ENCODE measurements at regions of chr5 and their contacts with region 1.

Region 1: GRCh38 chr5:58460732-58461286 is 923 bp upstream of the PLK2 start:
- DNase-seq: peak; percentile 97
- H3K4me3 Mint-ChIP-seq: peak overlapping the region; percentile 85
- H3K27ac Mint-ChIP-seq: peak overlapping the region; percentile 43
- H3K4me1 Mint-ChIP-seq: peaks cover 20% of the 10 kb centered on the region
- H3K27me3 Mint-ChIP-seq: peaks cover 22% of the 10 kb centered on the region

Region 2: DNA sequence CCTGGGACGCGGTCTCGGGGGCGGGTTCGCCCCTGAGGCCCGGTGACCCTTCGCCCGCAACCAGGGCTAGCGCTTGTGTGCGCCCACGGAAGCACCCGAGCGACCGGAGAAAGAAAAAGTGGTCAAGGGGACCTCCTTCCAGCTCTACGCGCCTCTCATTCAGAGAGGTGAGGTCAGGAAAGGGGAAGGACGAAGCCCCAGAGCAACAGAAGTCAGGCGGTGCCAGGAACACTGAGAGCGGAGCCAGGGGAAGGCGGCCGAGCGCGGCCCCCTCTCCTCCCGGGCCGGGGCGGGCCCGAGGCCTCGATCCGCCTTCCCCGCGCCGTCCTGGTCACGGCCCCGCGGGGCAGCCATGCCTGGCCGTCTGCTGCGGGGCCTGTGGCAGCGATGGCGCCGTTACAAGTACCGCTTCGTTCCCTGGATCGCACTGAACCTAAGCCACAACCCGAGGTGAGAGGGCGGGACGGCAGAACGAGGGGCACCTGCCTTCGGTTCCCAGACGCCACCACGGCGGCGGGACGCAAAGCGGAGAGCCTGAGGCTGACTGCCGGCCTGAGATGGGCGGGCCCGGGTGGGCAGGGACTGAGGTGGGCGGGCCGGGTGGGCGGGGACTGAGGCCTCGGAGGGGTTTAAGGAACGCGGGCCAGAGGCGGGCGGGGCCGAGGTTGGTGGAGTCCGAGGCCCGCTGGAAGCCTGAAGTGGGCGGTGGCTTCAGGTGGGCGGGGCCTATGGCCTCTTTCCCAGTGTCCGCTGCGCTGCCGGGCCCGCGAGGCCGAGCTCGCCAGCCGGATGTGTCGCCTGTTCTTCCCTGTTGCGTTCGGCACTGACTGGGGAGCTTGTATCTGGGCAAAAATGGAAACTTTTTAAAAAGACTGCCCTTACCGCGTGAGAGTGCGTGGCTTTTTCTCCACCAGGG is 1551.3 kb before region 1 on chr5 and contains the start of gene SETD9:
- intact Hi-C with region 1: loop called (anchors 5 kb)
- DNase-seq: peak; percentile 98
- H3K4me3 Mint-ChIP-seq: peak within 1 kb of the TSS; percentile 92
- H3K27ac Mint-ChIP-seq: peak within 1 kb of the TSS; percentile 98
- H3K4me1 Mint-ChIP-seq: peaks cover 21% of the 10 kb centered on the region
- H3K27me3 Mint-ChIP-seq: peaks cover 18% of the 10 kb centered on the region
- total RNA-seq, gene SETD9: 15.9 and 17.0 TPM in 2 replicates

Region 3: GRCh38 chr5:57298295-57298984 is 1162.4 kb before region 1 on chr5:
- intact Hi-C with region 1: loop called (anchors 1 kb)
- DNase-seq: peak; percentile 96
- H3K4me3 Mint-ChIP-seq: peak overlapping the region; percentile 76
- H3K27ac Mint-ChIP-seq: peak overlapping the region; percentile 55
- H3K4me1 Mint-ChIP-seq: peaks cover 18% of the 10 kb centered on the region
- H3K27me3 Mint-ChIP-seq: peaks cover 2% of the 10 kb centered on the region

Region 4: GRCh38 chr5:57499262-57500050 is 961.4 kb before region 1 on chr5:
- intact Hi-C with region 1: loop called (anchors 1 kb)
- DNase-seq: peak; percentile 74
- H3K4me3 Mint-ChIP-seq: peak overlapping the region; percentile 73
- H3K27ac Mint-ChIP-seq: peak overlapping the region; percentile 59
- H3K4me1 Mint-ChIP-seq: peaks cover 34% of the 10 kb centered on the region
- H3K27me3 Mint-ChIP-seq: peaks cover 5% of the 10 kb centered on the region

Region 5: DNA sequence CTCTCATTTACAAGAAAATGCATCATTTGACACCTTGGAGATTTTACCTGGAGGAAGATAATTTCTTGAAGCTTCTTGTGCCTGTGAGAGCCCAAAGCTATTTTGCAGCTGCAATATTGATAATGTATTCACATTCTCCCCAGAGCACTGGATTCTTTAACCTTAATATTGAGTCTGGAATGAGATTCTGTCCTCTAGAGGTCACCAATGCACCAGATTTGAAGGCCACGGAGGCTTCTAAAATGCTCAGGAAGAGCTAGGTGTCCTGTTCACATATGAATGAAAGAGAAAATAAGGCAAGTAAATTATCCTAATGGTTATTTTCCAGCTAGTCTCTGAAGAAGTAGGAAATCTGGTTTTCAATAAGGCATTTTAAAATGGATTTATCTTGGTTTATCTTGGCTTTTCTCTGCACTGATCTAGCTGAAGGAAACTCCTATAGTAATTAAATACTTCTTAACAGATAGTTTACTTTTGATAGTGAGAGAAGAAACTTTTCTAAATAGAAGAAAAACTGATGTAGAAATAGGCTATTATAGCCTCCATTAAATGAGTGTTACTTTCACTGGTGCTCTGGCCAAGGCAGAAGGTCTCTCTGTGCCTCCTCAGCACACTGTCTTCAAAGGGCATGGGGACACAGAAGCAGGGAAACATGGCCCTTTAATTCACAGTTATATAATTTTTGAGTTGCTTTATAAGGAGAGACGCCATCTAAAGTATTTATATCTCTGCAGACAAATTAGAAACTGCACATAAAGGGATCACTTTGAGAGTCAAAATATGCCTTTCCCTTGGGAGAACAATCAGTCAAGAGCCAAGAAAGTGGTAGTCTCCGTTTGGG is 681.2 kb before region 1 on chr5:
- intact Hi-C with region 1: loop called (anchors 1 kb)
- DNase-seq: peak; percentile 71
- H3K4me3 Mint-ChIP-seq: no peak overlapping the region
- H3K27ac Mint-ChIP-seq: no peak overlapping the region
- H3K4me1 Mint-ChIP-seq: no peaks in the 10 kb centered on the region
- H3K27me3 Mint-ChIP-seq: peaks cover 11% of the 10 kb centered on the region

Region 6: GRCh38 chr5:58335518-58335917 is 125.3 kb before region 1 on chr5:
- intact Hi-C with region 1: no loop called
- DNase-seq: no peak
- H3K4me3 Mint-ChIP-seq: no peak overlapping the region
- H3K27ac Mint-ChIP-seq: no peak overlapping the region
- H3K4me1 Mint-ChIP-seq: no peaks in the 10 kb centered on the region
- H3K27me3 Mint-ChIP-seq: no peaks in the 10 kb centered on the region

Measured in activated CD4-positive, alpha-beta T cell treated with anti-CD3 and anti-CD28 coated beads, Interleukin-2, amount 10 ng/mL, durations not matched to agents 24 days and 14 days (primary cell).